GM12878 (cell line): ENCODE measurements at regions of chr22 and their contacts with region 1.

Region 1: GRCh38 chr22:38755911-38756532 is at the start of gene SUN2:
- DNase-seq: peak; percentile 53
- ATAC-seq: peak; percentile 77
- H3K4me3 ChIP-seq: peak within 1 kb of the TSS; percentile 91
- H3K27ac ChIP-seq: peak within 1 kb of the TSS; percentile 90
- H3K4me1 ChIP-seq: peaks cover 44% of the 10 kb centered on the region
- H3K27me3 ChIP-seq: no peaks in the 10 kb centered on the region
- CTCF ChIP-seq: no peak
- EP300 ChIP-seq: no peak
- POLR2A ChIP-seq: peak; percentile 81
- RAD21 ChIP-seq: no peak
- polyA plus RNA-seq, gene SUN2: 0.18 to 0.95 TPM

Region 2: DNA sequence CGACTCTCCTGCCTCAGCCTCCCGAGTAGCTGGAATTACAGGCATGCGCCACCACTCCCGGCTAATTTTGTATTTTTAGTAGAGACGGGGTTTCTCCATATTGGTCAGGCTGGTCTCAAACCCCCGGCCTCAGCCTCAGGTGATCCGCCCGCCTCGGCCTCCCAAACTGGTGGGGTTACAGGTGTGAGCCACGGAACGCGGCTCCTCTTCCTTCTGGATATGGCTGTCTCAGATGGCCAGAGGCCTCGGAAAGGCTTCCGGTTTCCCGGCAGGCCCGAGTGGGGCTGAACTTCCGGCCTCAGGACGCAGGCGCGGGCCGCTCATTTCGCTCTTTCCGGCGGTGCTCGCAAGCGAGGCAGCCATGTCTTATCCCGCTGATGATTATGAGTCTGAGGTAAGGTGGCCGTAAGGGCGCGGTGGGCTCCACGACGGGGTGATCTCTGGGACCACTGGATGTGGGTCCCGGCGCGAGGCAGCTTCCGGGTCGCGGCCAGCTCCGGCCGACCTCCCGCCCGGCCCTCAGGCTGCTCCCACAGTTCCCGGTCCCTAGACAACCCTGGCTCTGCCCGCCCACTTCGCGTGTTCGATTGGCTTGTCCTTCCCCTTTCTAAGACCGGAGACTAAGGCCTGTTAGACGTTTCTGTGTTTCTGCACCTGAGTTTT is 906.8 kb before region 1 on chr22 and contains the start of gene EIF3L:
- CTCF ChIA-PET with region 1: no interaction called
- POLR2A ChIA-PET with region 1: no interaction called
- RAD21 ChIA-PET with region 1: no interaction called
- SMC1A ChIA-PET with region 1: no interaction called
- in situ Hi-C with region 1: no loop called
- intact Hi-C with region 1: loop called (anchors 10 kb)
- DNase-seq: peak; percentile 51
- ATAC-seq: peak; percentile 90
- H3K4me3 ChIP-seq: peak within 1 kb of the TSS; percentile 90
- H3K27ac ChIP-seq: peak within 1 kb of the TSS; percentile 81
- H3K4me1 ChIP-seq: peaks cover 3% of the 10 kb centered on the region; the same call in 1 of the 2 replicates
- H3K27me3 ChIP-seq: no peaks in the 10 kb centered on the region
- CTCF ChIP-seq: no peak
- EP300 ChIP-seq: no peak
- POLR2A ChIP-seq: peak; percentile 91
- RAD21 ChIP-seq: no peak
- polyA plus RNA-seq, gene EIF3L: 521 to 732 TPM

Region 3: DNA sequence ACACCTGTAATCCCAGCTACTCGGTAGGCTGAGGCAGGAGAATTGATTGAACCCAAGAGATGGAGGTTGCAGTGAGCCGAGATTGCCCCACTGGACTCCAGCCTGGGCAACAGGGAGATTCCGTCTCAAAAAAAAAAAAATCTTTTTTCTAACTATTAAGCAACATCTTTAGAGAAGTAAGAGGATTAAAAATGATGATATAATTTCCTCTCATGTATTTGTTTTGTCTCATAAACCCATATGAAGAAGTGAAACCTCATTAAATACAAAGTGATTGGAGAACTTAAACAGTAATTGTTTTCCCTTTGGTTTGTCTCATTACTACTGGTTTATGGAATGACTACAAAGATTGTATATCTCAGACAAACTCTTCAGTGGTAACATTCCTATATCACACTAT is 206.5 kb before region 1 on chr22:
- CTCF ChIA-PET with region 1: no interaction called
- POLR2A ChIA-PET with region 1: no interaction called
- RAD21 ChIA-PET with region 1: no interaction called
- SMC1A ChIA-PET with region 1: no interaction called
- in situ Hi-C with region 1: no loop called
- intact Hi-C with region 1: no loop called
- DNase-seq: no peak
- ATAC-seq: peak; percentile 82
- H3K4me3 ChIP-seq: no peak overlapping the region
- H3K27ac ChIP-seq: no peak overlapping the region
- H3K4me1 ChIP-seq: no peaks in the 10 kb centered on the region
- H3K27me3 ChIP-seq: no peaks in the 10 kb centered on the region
- CTCF ChIP-seq: no peak
- EP300 ChIP-seq: no peak
- POLR2A ChIP-seq: no peak
- RAD21 ChIP-seq: no peak

Region 4: DNA sequence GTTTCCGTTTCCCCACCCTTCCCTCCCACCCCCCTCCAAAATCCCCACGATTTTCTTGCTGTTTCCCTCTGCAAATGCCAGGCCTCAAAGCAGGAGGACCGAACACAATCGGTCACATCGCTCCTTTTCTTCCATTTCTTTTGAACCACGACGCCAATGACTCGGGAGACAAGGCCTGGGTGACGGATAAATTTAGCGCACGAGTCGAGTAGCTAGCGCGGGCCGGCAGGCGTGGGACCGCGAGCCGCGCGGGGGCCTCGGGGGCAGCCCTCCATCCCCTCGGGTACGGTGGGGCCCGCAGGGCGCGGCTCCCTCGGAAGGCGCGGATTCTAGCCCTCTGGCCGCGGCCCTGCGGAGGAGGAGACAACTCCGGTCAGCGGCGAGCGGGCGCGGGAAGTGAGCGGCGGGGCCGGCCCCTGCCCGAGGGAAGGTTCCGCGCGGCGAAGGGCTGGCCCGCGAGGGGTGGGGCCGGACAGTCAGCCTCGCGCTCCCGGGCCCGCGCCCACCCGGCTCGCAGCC is 55.7 kb before region 1 on chr22:
- CTCF ChIA-PET with region 1: interaction called, 3 read pairs
- POLR2A ChIA-PET with region 1: interaction called, 27 read pairs
- RAD21 ChIA-PET with region 1: interaction called, 11 read pairs
- SMC1A ChIA-PET with region 1: interaction called, 7 read pairs
- in situ Hi-C with region 1: no loop called
- intact Hi-C with region 1: loop called (anchors 1 kb)
- DNase-seq: no peak
- ATAC-seq: peak; percentile 32
- H3K4me3 ChIP-seq: peak overlapping the region; percentile 86
- H3K27ac ChIP-seq: peak overlapping the region; percentile 89
- H3K4me1 ChIP-seq: peaks cover 12% of the 10 kb centered on the region
- H3K27me3 ChIP-seq: no peaks in the 10 kb centered on the region
- CTCF ChIP-seq: no peak
- EP300 ChIP-seq: no peak
- POLR2A ChIP-seq: no peak
- RAD21 ChIP-seq: no peak

Region 5: DNA sequence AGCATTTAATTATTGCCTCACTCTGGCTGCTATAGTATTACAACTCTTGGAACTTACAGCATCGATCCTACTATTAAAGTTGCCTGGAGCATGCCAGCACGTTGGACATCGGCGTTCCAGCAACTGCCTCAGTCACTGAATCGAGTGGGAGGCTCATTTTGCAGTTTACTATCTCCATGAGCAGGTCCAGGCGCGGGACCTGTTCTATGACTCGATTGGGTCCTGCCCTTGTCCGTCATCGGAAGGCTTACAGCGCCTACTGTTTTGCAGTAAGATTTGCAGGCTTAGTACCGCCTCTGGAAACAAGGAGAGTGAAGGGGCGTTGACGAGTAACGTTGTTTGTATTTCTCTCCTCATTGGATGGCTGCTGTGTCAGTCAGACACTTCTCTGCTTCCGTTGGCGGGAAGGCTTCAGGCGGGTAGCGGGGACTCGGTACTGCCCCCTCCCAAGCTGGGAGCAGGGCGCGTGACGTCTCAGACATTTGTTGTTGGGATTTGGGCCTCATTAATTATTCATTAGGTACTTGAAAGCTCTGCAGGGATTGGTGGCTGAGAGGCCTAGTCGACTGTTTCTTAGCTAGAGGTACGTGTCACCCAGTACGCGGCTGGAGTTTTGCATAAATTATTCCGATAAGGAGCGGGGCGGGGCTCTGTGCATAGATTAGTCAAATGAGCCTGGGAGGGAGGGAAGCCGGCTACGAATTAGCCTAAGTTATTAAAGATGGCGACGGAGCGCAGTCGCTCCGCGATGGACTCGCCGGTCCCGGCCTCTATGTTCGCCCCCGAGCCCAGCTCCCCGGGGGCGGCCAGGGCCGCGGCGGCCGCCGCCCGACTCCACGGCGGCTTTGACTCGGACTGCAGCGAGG is 50.6 kb before region 1 on chr22 and contains the start of gene GTPBP1:
- CTCF ChIA-PET with region 1: interaction called, 4 read pairs
- POLR2A ChIA-PET with region 1: interaction called, 27 read pairs
- RAD21 ChIA-PET with region 1: interaction called, 11 read pairs
- SMC1A ChIA-PET with region 1: interaction called, 4 read pairs
- in situ Hi-C with region 1: no loop called
- intact Hi-C with region 1: loop called (anchors 1 kb)
- DNase-seq: peak; percentile 100
- ATAC-seq: peak; percentile 85
- H3K4me3 ChIP-seq: peak within 1 kb of the TSS; percentile 95
- H3K27ac ChIP-seq: peak within 1 kb of the TSS; percentile 85
- H3K4me1 ChIP-seq: peaks cover 25% of the 10 kb centered on the region
- H3K27me3 ChIP-seq: no peaks in the 10 kb centered on the region
- CTCF ChIP-seq: no peak
- EP300 ChIP-seq: peak in 1 of 2 experiments; percentile 18; a peak in 1 of 4 replicates
- POLR2A ChIP-seq: peak; percentile 79
- RAD21 ChIP-seq: no peak
- polyA plus RNA-seq, gene GTPBP1: 0.89 to 1.9 TPM

Region 6: DNA sequence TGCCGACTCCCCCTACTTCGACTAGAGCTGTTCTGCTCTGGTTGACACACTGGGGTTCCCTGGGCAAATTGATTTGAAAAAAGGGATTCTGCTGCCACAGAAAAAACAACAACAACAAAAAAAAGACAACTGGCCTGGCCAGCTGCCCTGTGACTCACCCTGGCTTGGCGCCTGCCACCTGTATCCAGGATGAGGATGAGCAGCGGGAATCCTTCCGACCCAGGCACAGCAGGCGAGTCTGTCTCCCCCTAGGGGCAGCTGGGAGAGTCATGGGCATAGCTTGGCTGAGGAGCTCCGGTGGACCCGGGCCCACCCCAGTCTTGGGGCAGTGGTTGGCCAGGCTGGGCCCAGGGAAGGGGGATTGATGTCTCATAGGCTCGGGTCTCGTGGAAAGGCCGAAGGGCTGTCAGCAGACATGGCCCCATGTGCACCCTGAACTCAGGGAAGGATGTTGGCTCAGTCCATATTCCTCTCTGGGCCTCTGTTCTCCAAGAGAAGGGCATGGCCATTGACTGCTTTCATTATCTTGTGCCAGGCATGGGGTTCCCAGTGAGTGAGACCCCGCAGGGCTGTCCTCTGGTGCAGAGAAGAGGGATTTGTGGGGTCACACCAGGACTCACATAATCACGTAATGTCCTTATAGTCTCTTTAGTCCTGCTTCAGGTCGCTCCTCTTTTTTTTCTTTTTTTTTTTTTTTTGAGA is 10.2 kb after region 1 on chr22:
- CTCF ChIA-PET with region 1: interaction called, 42 read pairs
- POLR2A ChIA-PET with region 1: no interaction called
- RAD21 ChIA-PET with region 1: interaction called, 5 read pairs
- SMC1A ChIA-PET with region 1: interaction called, 5 read pairs
- in situ Hi-C with region 1: no loop called
- intact Hi-C with region 1: no loop called
- DNase-seq: no peak
- ATAC-seq: peak; percentile 75
- H3K4me3 ChIP-seq: no peak overlapping the region
- H3K27ac ChIP-seq: no peak overlapping the region
- H3K4me1 ChIP-seq: peaks cover 2% of the 10 kb centered on the region; the same call in 1 of the 2 replicates
- H3K27me3 ChIP-seq: no peaks in the 10 kb centered on the region; a peak in 1 of 4 replicates
- CTCF ChIP-seq: peak; percentile 70 to 86 (median 71)
- EP300 ChIP-seq: no peak
- POLR2A ChIP-seq: no peak
- RAD21 ChIP-seq: no peak

Region 7: DNA sequence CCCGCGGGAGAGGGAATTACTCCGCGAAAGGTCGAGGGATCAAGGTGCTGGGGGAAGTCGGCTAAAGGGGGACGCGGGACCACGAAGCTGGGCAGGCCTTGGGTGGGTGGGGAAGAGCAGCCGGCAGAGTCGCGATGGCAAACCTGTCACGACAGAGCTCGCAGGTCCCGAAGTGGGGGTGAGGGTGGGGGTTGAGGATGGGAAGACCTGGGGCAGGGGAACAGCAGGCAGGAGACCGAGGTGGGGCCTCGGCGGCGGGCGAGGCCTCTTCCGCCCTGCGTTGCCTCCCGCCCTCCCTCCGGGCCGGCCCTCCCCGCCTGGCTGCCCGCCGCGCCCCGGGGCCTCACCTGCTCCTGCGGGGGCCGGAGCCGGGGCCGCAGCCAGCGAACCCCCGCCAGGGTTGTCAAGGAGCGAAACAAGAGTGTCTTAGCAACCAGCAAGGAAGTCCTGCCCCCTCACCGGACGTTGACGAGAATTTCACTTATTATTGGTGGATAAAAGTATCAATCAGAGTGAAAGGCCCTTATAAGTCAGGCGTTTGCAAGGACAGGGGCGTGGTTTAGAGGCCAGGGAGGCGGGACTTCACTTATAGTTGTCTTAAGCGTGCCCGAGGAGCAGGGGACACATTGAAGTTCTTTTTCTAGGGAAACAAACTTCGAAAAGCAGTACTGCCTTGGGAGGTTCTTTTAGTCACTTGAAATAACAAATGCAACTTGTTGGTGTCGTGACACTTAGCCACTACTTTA is 37.9 kb after region 1 on chr22 and contains the start of gene DNAL4:
- CTCF ChIA-PET with region 1: no interaction called
- POLR2A ChIA-PET with region 1: interaction called, 3 read pairs
- RAD21 ChIA-PET with region 1: no interaction called
- SMC1A ChIA-PET with region 1: no interaction called
- in situ Hi-C with region 1: no loop called
- intact Hi-C with region 1: loop called (anchors 1 kb)
- DNase-seq: peak; percentile 98
- ATAC-seq: peak; percentile 100
- H3K4me3 ChIP-seq: peak within 1 kb of the TSS; percentile 93
- H3K27ac ChIP-seq: no peak within 1 kb of the TSS; the same call in 1 of the 2 replicates
- H3K4me1 ChIP-seq: 0 out of 2 replicates have a peak, but pooled peaks cover 3% of the 10 kb centered on the region
- H3K27me3 ChIP-seq: peaks cover 0 to 2% of the 10 kb centered on the region in 2 experiments; a peak in 1 of 4 replicates
- CTCF ChIP-seq: no peak
- EP300 ChIP-seq: no peak
- POLR2A ChIP-seq: peak; percentile 85
- RAD21 ChIP-seq: no peak
- polyA plus RNA-seq, gene DNAL4: 0.35 TPM in 1 of 2 experiments, not detected in the other